Endothelial cell of umbilical vein (primary cell): ENCODE measurements at regions of chr11 and their contacts with region 1.

Region 1: DNA sequence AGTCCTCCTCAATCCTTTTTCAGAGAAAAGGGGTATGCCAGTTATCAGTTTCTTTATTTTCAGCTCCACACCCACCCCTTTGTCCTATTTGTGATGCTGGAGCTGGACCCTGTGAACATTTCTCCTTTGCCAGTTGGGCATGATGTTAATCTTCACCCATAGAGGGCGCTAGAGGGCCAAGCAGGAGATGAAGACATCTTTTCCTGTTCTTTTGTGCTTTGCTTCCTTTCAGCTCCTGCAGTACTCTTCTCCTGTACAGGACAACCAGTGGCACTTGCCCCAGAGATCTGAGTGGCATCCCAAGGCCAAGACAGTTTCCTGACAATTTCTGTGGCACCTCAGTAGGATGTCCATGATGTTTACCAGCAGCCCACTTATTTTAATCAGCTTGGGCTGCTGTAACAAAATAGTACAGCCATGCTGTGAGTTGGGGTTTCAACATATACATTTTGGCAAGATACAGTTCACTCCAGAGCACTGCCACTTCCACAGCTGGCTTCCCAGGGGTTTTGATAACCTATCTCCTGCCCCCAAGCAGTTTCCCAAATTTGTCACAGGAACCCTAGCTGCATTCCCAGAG is 4.6 kb downstream of the SAA2 start:
- DNase-seq: peak; percentile 65
- H3K4me3 ChIP-seq: no peak overlapping the region
- H3K27ac ChIP-seq: no peak overlapping the region
- H3K4me1 ChIP-seq: no peaks in the 10 kb centered on the region
- H3K27me3 ChIP-seq: peaks cover 10 to 13% of the 10 kb centered on the region in 2 experiments
- CTCF ChIP-seq: peak; percentile 69 to 84
- POLR2A ChIP-seq: no peak

Region 2: DNA sequence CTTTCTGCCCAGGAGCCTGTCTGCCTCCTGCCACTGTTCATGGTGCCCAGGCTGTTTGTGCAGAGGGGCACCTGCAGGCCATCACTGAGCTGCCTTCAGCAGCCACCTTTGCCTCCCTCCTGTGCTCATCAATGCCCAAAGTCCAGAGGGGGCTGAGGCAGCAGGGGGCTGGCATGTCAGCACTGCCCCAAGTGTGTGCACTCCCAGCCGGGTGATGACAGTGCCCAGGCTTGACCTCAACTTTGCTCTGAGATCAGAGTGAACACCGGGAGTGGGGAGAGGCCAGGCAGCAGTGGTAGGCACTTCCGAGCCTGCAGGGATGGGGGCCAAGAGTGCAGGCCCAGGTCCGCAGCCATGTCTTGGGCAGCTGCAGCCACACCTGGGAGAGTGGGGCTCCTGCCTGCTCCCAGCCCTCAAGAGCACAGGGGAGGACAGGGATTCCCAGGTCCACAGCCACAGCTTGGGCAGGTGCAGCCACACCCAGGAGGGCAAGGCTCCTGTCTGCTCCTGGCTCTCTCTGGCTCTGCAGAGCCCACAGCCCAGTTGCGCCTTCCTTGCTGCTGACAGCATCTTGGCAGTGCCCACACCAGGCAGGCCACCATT is 22.5 kb before region 1 on chr11:
- CTCF ChIA-PET with region 1: interaction called, 11 read pairs
- POLR2A ChIA-PET with region 1: no interaction called
- dilution Hi-C with region 1: no loop called
- intact Hi-C with region 1: no loop called
- DNase-seq: no peak
- H3K4me3 ChIP-seq: no peak overlapping the region
- H3K27ac ChIP-seq: no peak overlapping the region
- H3K4me1 ChIP-seq: no peaks in the 10 kb centered on the region
- H3K27me3 ChIP-seq: no peaks in the 10 kb centered on the region
- CTCF ChIP-seq: no peak
- POLR2A ChIP-seq: no peak

Region 3: GRCh38 chr11:18294862-18295261 is 51.0 kb after region 1 on chr11:
- CTCF ChIA-PET with region 1: interaction called, 10 read pairs
- POLR2A ChIA-PET with region 1: no interaction called
- dilution Hi-C with region 1: no loop called
- intact Hi-C with region 1: no loop called
- DNase-seq: no peak
- H3K4me3 ChIP-seq: no peak overlapping the region
- H3K27ac ChIP-seq: no peak overlapping the region
- H3K4me1 ChIP-seq: no peaks in the 10 kb centered on the region
- H3K27me3 ChIP-seq: no peaks in the 10 kb centered on the region
- CTCF ChIP-seq: no peak
- POLR2A ChIP-seq: no peak

Region 4: DNA sequence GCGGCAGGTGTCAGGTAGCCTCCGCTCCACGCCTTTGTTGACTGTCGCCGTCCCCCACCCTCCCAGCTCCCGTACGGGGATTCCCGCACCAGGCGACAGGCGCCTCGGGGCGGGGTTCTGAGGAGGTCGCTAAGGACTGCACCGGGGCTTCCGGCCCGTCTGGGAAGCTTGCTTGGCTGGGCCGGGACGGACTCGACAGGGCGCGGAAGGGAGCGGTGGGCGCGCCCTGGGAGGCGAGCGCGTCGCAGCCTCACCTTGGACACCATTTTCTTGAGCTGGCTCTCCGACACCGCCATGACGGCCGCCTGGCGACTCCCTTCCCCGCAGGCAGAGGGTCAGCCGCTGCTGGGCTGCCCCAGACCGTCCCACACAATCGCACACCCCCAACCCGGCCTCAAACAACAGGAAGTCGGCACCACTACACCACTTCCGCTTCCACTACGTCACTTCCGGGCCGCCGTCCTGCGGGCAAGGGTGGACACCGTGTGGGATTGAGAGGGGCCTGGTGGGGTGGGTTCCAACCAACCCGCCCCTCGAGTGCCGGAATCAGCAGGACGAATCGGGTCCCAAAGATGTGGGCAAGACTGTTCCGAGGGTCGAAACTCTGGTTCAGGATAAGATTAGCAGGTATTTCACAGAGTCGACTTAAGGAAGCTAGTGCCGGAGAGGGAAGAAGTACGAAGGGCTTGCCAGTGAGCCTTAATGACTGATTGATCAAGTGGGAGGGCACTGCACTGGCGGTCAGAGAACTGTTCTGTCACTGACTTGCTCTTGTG is 282.8 kb after region 1 on chr11 and contains the start of gene TSG101:
- CTCF ChIA-PET with region 1: interaction called, 7 read pairs
- POLR2A ChIA-PET with region 1: interaction called, 3 read pairs
- dilution Hi-C with region 1: no loop called
- intact Hi-C with region 1: loop called (anchors 10 kb)
- DNase-seq: peak; percentile 98
- H3K4me3 ChIP-seq: peak within 1 kb of the TSS; percentile 51 to 96 (median 74)
- H3K27ac ChIP-seq: peak within 1 kb of the TSS; percentile 99
- H3K4me1 ChIP-seq: peaks cover 15% of the 10 kb centered on the region
- H3K27me3 ChIP-seq: no peaks in the 10 kb centered on the region
- CTCF ChIP-seq: no peak
- POLR2A ChIP-seq: peak; percentile 96
- total RNA-seq, gene TSG101: 41.3 and 45.5 TPM in 2 replicates

Region 5: GRCh38 chr11:18650859-18651557 is 407.1 kb after region 1 on chr11:
- CTCF ChIA-PET with region 1: interaction called, 45 read pairs
- POLR2A ChIA-PET with region 1: no interaction called
- dilution Hi-C with region 1: no loop called
- intact Hi-C with region 1: loop called (anchors 1 kb)
- DNase-seq: peak; percentile 58
- H3K4me3 ChIP-seq: no peak overlapping the region
- H3K27ac ChIP-seq: no peak overlapping the region
- H3K4me1 ChIP-seq: no peaks in the 10 kb centered on the region
- H3K27me3 ChIP-seq: no peaks in the 10 kb centered on the region
- CTCF ChIP-seq: peak; percentile 68 to 69
- POLR2A ChIP-seq: no peak

Region 6: DNA sequence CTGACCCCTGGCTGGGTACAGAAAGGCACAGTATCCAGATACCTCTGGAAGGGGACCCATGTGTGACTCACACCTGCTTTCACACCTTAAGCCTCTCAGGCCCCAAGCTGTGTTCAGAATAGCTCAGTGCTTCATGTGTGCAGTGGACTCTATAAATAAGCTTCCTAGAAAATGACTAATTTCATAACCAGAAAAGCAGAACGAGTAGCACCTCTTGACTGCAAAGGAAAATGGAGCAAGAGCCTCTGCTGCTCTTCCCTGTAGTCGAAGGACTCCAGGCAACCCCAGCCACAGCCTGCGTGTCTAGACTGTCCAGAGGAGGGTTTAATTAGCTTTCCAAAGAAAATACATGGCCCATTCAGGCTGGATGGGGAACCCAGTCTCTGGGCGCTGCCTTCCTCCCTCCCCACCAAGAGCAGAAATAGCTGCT is 524.6 kb after region 1 on chr11:
- CTCF ChIA-PET with region 1: interaction called, 7 read pairs
- POLR2A ChIA-PET with region 1: no interaction called
- dilution Hi-C with region 1: no loop called
- intact Hi-C with region 1: loop called (anchors 1 kb)
- DNase-seq: no peak
- H3K4me3 ChIP-seq: no peak overlapping the region
- H3K27ac ChIP-seq: no peak overlapping the region
- H3K4me1 ChIP-seq: peaks cover 11% of the 10 kb centered on the region
- H3K27me3 ChIP-seq: peaks cover 0 to 3% of the 10 kb centered on the region in 2 experiments
- CTCF ChIP-seq: no peak
- POLR2A ChIP-seq: no peak

Region 7: GRCh38 chr11:19110280-19110679 is 866.4 kb after region 1 on chr11:
- CTCF ChIA-PET with region 1: no interaction called
- POLR2A ChIA-PET with region 1: no interaction called
- dilution Hi-C with region 1: no loop called
- intact Hi-C with region 1: no loop called
- DNase-seq: peak; percentile 24
- H3K4me3 ChIP-seq: no peak overlapping the region
- H3K27ac ChIP-seq: no peak overlapping the region
- H3K4me1 ChIP-seq: peaks cover 7% of the 10 kb centered on the region
- H3K27me3 ChIP-seq: no peaks in the 10 kb centered on the region
- CTCF ChIP-seq: no peak
- POLR2A ChIP-seq: no peak